ENCODE measurements at regions of chrX and their contacts with region 1.

Region 1: DNA sequence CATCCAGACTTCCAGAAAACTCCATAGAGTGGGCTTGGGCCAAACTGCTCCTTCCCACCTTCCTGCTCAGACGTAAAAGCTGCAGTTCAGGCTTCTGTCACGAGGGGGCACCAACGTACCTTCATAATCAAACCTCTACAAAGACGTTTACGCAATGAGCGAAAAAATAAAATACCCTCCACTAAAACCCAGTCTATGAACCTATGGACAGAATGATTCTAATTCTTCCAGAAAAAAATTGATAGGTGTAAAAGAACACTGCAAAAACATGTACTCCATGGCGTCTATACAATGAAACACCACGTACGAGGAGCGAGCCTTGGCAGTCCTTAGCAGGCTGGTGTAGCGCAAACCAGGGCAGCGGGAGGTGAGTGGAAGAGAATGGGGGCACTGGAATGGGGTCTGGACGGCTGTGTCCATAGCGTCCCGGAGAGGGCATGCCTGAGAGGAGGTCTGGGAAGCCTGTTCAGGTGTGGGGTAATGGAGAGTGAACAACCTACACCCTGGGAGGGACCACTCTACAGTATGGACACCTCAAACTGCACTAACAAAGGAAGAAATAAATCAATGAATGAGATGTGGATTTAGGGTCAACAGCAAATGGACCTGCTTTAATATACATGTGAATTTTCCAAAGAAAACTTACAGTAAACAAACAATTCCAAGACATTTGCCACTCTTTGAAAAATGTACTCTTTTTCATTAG is 14.4 kb upstream of the RAB40A start:
- DNase-seq: peak; percentile 73 to 81
- ATAC-seq: peak; percentile 63 to 87 (median 80)
- H3K4me3 ChIP-seq: peak overlapping the region; percentile 62
- H3K27ac ChIP-seq: no peak overlapping the region
- H3K4me1 ChIP-seq: no peaks in the 10 kb centered on the region
- H3K27me3 ChIP-seq: no peaks in the 10 kb centered on the region
- CTCF ChIP-seq: peak; percentile 88

Region 2: DNA sequence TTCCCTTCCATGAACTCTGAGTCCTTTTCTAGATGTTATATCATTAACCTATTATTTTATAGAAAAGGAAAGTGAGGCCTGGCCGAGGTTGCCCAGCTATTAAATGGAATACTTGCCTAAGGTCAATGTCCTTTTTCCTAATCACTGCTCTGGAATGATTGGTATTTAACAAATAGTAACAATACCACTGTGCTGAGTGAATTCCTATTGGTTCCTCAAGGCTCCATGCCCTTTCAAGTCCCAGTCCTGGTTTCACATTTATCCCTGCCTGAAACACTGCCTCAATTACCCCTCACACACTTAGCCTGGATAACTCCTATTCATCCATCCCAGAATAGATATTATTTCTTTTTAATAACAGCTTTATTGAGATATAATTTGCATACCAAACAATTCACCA is 171.2 kb before region 1 on chrX:
- intact Hi-C with region 1: no loop called
- DNase-seq: no peak
- ATAC-seq: no peak
- H3K4me3 ChIP-seq: no peak overlapping the region
- H3K27ac ChIP-seq: no peak overlapping the region
- H3K4me1 ChIP-seq: no peaks in the 10 kb centered on the region
- H3K27me3 ChIP-seq: no peaks in the 10 kb centered on the region
- CTCF ChIP-seq: no peak

Region 3: GRCh38 chrX:103413705-103414387 is 119.8 kb before region 1 on chrX:
- intact Hi-C with region 1: no loop called
- DNase-seq: no peak
- ATAC-seq: no peak
- H3K4me3 ChIP-seq: no peak overlapping the region
- H3K27ac ChIP-seq: no peak overlapping the region
- H3K4me1 ChIP-seq: no peaks in the 10 kb centered on the region
- H3K27me3 ChIP-seq: peaks cover 0 to 11% (median 0%) of the 10 kb centered on the region in 3 donors
- CTCF ChIP-seq: no peak

Region 4: DNA sequence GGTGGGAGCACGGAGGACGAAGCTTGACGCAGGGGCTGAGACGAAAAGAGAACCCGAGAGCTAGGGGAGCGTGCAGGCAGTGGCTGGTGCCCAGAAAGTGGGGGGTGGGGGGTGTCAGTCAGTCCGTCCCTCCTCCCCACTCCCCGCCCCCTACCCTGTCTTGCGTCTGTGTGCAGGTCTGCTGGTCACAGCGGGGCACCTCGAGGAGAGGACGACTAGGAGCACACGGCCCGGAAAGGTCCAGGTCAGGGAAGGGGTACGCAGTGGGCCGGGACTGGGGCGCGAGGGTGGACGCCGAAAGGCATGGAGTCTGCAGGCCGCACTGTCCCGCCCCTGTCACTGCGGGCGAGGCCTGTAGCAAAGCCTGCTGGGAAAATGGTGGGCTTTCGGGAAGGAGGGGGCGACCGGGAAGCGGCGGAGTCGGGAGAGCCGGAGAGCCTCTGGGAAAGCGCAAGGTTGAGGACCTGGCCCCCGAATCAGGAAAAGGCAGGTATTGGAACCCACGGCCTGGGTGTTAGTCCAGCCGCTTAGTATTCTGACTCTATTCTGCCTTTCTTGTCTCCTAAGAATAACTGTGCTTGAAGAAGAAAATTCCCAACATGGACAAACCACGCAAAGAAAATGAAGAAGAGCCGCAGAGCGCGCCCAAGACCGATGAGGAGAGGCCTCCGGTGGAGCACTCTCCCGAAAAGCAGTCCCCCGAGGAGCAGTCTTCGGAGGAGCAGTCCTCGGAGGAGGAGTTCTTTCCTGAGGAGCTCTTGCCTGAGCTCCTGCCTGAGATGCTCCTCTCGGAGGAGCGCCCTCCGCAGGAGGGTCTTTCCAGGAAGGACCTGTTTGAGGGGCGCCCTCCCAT is 95.9 kb after region 1 on chrX:
- intact Hi-C with region 1: loop called in 1 of 2 experiments (anchors 10 kb)
- DNase-seq: peak; percentile 65 to 71
- ATAC-seq: peak; percentile 79 to 89 (median 82)
- H3K4me3 ChIP-seq: peak overlapping the region; percentile 78
- H3K27ac ChIP-seq: peak overlapping the region; percentile 87
- H3K4me1 ChIP-seq: peaks cover 9% of the 10 kb centered on the region
- H3K27me3 ChIP-seq: peaks cover 0 to 10% (median 0%) of the 10 kb centered on the region in 3 donors
- CTCF ChIP-seq: peak; percentile 20

Region 5: GRCh38 chrX:103686199-103687072 is 152.8 kb after region 1 on chrX and contains the start of gene MORF4L2:
- intact Hi-C with region 1: loop called (anchors 10 kb)
- DNase-seq: peak; percentile 85 to 93
- ATAC-seq: peak; percentile 87 to 90 (median 88)
- H3K4me3 ChIP-seq: peak within 1 kb of the TSS; percentile 71
- H3K27ac ChIP-seq: peak within 1 kb of the TSS; percentile 87
- H3K4me1 ChIP-seq: peaks cover 5% of the 10 kb centered on the region
- H3K27me3 ChIP-seq: no peaks in the 10 kb centered on the region
- CTCF ChIP-seq: no peak
- total RNA-seq, gene MORF4L2: 182 to 273 (median 218) TPM

Region 6: DNA sequence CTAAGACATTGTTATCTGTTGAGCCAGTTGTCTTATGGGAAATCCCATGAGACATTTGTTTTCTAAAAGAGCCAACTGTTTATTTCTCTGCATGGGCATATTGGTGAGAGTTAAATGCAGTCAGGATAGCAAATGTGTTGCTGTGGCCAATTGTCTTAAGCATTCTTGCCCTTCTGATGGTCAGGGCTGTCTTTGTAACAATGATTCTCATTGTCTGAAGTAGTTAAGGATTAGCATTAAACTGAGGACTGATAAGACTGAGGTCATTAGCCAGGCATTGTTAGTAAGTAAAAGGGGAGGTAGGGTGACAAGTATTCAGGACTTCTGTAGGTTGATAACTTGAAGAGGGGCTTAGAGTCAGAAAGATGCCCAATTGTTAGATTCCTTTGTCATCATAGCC is 164.0 kb after region 1 on chrX:
- intact Hi-C with region 1: loop called in 1 of 2 experiments (anchors 10 kb)
- DNase-seq: no peak
- ATAC-seq: no peak
- H3K4me3 ChIP-seq: no peak overlapping the region
- H3K27ac ChIP-seq: no peak overlapping the region
- H3K4me1 ChIP-seq: no peaks in the 10 kb centered on the region
- H3K27me3 ChIP-seq: peaks cover 0 to 9% (median 0%) of the 10 kb centered on the region in 3 donors
- CTCF ChIP-seq: no peak

Region 7: DNA sequence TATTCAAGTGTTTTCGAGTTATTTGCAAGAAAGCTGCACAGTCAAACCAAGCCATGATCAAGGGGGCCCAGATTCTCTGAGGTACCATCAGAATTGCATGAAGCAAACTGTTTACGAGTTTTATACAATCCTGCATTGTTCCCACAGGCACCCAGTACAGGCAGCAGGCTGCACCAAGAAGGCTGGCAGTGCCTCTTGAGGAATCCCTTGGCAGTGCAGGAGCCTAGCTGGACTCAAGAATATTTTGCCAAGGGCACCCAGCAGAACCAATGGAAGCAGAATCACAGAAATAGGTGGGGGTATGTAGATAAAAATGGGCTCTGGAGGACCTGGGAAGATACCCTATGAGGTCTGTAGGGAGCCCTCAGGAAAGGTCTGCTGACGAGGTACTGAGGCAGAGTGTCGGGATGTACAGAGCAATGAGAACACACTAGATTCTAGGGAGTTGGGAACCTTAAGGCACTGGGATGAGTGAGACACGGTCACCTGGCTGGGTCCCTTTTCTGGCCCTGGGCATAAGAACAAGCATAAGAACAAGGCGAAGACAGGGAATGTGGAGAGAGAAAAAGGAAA is 240.5 kb after region 1 on chrX:
- intact Hi-C with region 1: loop called in 1 of 2 experiments (anchors 2 kb)
- DNase-seq: no peak
- ATAC-seq: peak; percentile 55 to 79 (median 68)
- H3K4me3 ChIP-seq: no peak overlapping the region
- H3K27ac ChIP-seq: no peak overlapping the region
- H3K4me1 ChIP-seq: no peaks in the 10 kb centered on the region
- H3K27me3 ChIP-seq: peaks cover 0 to 23% (median 0%) of the 10 kb centered on the region in 3 donors
- CTCF ChIP-seq: peak; percentile 40

Region 8: DNA sequence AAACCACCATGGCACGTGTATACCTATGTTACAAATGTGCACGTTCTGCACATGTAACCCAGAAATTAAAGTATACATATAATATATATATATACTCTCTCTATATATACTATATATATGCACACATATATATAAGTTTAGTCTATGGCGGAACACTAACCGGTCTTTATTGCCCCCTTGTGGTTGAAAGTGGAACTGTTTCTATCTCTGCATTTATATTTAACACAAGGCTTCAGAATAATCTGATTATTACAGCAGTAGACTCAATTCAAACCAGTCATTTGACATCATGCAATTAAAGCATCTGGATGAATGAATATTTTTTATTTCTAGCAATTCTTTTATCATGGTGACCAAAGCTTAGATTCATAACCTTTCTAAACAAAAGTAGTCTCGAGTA is 283.8 kb after region 1 on chrX:
- intact Hi-C with region 1: loop called (anchors 5 to 10 kb)
- DNase-seq: no peak
- ATAC-seq: peak in 1 of 4 donors; percentile 42
- H3K4me3 ChIP-seq: no peak overlapping the region
- H3K27ac ChIP-seq: no peak overlapping the region
- H3K4me1 ChIP-seq: no peaks in the 10 kb centered on the region
- H3K27me3 ChIP-seq: no peaks in the 10 kb centered on the region
- CTCF ChIP-seq: peak; percentile 82

Region 9: DNA sequence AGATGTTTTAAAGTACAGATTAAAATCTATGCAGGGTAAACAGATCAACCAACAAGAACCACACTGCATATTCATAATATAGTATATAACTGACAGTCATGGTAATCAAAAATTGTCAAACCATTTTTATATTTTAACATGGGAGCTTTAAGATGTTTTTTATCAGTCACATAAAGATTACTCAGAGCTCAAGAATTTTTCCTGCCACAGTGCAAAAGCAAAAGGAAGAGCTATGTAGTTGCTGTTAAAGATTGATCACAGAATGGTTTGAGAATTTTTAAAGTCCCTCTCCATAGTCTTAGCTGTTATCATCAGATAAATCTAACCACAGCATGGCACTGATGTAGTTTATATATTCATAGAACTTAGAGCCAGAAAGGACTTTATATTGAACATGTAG is 289.9 kb after region 1 on chrX:
- intact Hi-C with region 1: loop called (anchors 5 to 10 kb)
- DNase-seq: no peak
- ATAC-seq: no peak
- H3K4me3 ChIP-seq: no peak overlapping the region
- H3K27ac ChIP-seq: no peak overlapping the region
- H3K4me1 ChIP-seq: no peaks in the 10 kb centered on the region
- H3K27me3 ChIP-seq: peaks cover 0 to 14% (median 0%) of the 10 kb centered on the region in 3 donors
- CTCF ChIP-seq: no peak

Measured in psoas muscle (tissue), 8 donors.